CD4-positive, alpha-beta T cell (primary cell): ENCODE measurements at regions of chr21 and their contacts with region 1.

Region 1: DNA sequence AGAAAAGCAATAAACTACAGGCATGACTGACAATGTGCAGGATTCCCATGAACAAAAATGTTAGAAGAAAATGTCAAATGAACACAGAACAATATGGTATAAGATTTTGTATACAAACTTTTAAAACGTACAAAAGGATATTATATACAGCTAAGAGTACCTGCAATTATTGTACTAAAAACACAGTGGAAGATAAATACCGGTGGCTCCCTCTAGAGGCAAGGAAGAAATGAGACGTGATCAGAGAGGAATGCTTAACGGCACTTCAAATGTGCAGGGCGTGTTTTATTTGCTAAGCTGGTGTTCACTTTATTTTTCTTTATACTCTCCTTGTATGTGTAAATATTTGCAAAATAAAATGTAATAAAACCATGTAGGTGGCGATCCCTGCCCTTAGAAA is 191.8 kb upstream of the SAMSN1 start:
- DNase-seq: peak in 11 of 14 experiments; percentile 8 to 86 (median 34)
- ATAC-seq: peak; percentile 95
- H3K4me3 ChIP-seq: no peak overlapping the region
- H3K4me3 Mint-ChIP-seq: no peak overlapping the region
- H3K27ac ChIP-seq: no peak overlapping the region
- H3K27ac Mint-ChIP-seq: no peak overlapping the region
- H3K4me1 ChIP-seq: no peaks in the 10 kb centered on the region
- H3K4me1 Mint-ChIP-seq: peaks cover 5% of the 10 kb centered on the region
- H3K27me3 ChIP-seq: no peaks in the 10 kb centered on the region
- H3K27me3 Mint-ChIP-seq: no peaks in the 10 kb centered on the region
- CTCF ChIP-seq: peak; percentile 75

Region 2: DNA sequence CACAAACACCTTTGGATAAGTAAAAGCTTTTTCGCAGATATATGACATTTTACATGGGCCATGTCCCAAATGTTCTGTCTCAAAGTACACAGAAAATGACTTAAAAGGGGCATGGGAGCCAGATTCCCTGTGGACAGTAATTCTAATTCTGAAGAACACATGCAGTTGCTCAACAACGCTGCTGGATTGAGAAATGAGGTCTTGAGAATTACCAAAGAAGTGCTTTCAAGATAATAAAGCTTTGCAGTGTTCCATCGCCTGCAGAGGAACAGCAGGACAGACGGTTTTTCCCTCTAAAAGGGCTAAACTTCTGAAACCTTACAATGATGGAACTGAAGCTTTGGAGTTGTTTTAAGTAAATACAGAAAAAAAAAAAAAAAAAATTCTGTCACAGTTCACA is 299.7 kb before region 1 on chr21:
- CTCF ChIA-PET with region 1: interaction called, 3 read pairs
- POLR2A ChIA-PET with region 1: no interaction called
- intact Hi-C with region 1: loop called in 1 of 2 experiments (anchors 5 kb)
- DNase-seq: no peak
- ATAC-seq: no peak
- H3K4me3 ChIP-seq: no peak overlapping the region
- H3K4me3 Mint-ChIP-seq: no peak overlapping the region
- H3K27ac ChIP-seq: no peak overlapping the region
- H3K27ac Mint-ChIP-seq: no peak overlapping the region
- H3K4me1 ChIP-seq: no peaks in the 10 kb centered on the region
- H3K4me1 Mint-ChIP-seq: no peaks in the 10 kb centered on the region
- H3K27me3 ChIP-seq: no peaks in the 10 kb centered on the region
- H3K27me3 Mint-ChIP-seq: no peaks in the 10 kb centered on the region
- CTCF ChIP-seq: no peak

Region 3: DNA sequence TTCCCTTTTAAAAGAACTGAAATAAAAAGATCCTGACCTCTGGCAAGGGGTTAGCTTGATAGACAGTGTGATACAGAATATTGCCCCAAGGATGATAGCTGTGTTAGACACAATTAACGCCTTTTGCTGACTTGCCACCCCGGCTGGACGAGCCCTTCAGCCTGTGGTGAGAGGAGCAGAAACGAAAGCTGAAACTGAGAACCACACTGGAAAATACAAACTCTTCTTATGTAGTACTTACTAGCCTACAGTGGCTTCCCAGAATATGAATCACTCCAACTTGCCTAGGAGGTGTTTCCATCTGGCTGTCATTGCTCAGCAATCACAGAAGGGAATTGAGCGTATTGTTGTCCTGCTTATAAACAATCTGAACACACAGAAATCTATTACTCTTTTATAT is 214.7 kb before region 1 on chr21:
- CTCF ChIA-PET with region 1: interaction called, 5 read pairs
- POLR2A ChIA-PET with region 1: no interaction called
- intact Hi-C with region 1: loop called in 1 of 2 experiments (anchors 10 kb)
- DNase-seq: peak in 4 of 14 experiments; percentile 7 to 59 (median 50)
- ATAC-seq: peak; percentile 57
- H3K4me3 ChIP-seq: peak overlapping the region; percentile 17
- H3K4me3 Mint-ChIP-seq: peak overlapping the region; percentile 75
- H3K27ac ChIP-seq: no peak overlapping the region
- H3K27ac Mint-ChIP-seq: peak overlapping the region; percentile 35
- H3K4me1 ChIP-seq: peaks cover 25% of the 10 kb centered on the region
- H3K4me1 Mint-ChIP-seq: peaks cover 79% of the 10 kb centered on the region
- H3K27me3 ChIP-seq: no peaks in the 10 kb centered on the region
- H3K27me3 Mint-ChIP-seq: no peaks in the 10 kb centered on the region
- CTCF ChIP-seq: no peak

Region 4: DNA sequence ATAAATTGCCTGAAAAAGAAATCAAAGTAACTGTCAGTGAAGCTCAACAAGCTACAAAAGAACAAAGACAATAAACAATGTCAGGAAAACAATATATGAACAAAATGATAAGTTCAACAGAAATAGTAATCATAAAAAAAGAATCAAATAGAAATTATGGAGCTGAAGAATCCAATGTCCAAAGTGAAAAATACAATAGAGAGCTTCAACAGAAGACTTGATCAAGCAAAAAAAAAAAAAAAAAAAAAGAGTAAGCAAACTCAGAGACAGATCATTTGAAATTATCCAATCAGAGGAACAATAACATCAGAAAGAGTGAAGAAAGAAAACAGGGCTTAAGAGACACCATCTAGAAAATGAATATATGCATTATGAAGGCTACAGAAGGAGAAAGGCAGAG is 59.6 kb after region 1 on chr21:
- CTCF ChIA-PET with region 1: no interaction called
- POLR2A ChIA-PET with region 1: no interaction called
- intact Hi-C with region 1: no loop called
- DNase-seq: no peak
- ATAC-seq: no peak
- H3K4me3 ChIP-seq: no peak overlapping the region
- H3K4me3 Mint-ChIP-seq: no peak overlapping the region
- H3K27ac ChIP-seq: no peak overlapping the region
- H3K27ac Mint-ChIP-seq: no peak overlapping the region
- H3K4me1 ChIP-seq: no peaks in the 10 kb centered on the region
- H3K4me1 Mint-ChIP-seq: no peaks in the 10 kb centered on the region
- H3K27me3 ChIP-seq: no peaks in the 10 kb centered on the region
- H3K27me3 Mint-ChIP-seq: peaks cover 8% of the 10 kb centered on the region
- CTCF ChIP-seq: no peak

Region 5: DNA sequence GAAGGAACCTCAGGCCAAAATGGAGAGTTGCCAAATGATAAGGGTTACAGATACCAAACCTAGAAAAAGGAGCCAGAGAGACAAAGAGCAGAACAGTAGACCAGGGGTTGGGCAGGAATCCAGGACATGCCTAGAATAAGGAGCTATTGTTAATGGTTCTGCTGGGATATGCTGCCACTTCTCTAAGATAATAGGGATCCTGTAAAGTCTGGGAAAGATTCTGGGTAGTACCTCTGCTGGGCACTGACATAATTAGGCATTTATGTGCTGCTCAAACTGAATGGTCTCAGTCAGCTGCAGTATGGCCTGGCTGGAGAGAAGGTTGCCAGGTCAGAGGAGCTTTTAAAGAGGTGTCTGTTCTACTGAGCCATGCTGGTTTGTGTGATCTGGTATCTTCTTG is 346.7 kb after region 1 on chr21:
- CTCF ChIA-PET with region 1: no interaction called
- POLR2A ChIA-PET with region 1: no interaction called
- intact Hi-C with region 1: no loop called
- DNase-seq: no peak
- ATAC-seq: no peak
- H3K4me3 ChIP-seq: no peak overlapping the region
- H3K4me3 Mint-ChIP-seq: no peak overlapping the region
- H3K27ac ChIP-seq: no peak overlapping the region
- H3K27ac Mint-ChIP-seq: no peak overlapping the region
- H3K4me1 ChIP-seq: no peaks in the 10 kb centered on the region
- H3K4me1 Mint-ChIP-seq: no peaks in the 10 kb centered on the region
- H3K27me3 ChIP-seq: peaks cover 0 to 4% of the 10 kb centered on the region in 2 experiments
- H3K27me3 Mint-ChIP-seq: peaks cover 6% of the 10 kb centered on the region
- CTCF ChIP-seq: no peak